ENCODE measurements at regions of chr3 and their contacts with region 1.

Region 1: GRCh38 chr3:49378249-49378892 is 20.2 kb upstream of the GPX1 start:
- DNase-seq: peak; percentile 85
- H3K4me3 ChIP-seq: no peak overlapping the region
- H3K27me3 ChIP-seq: no peaks in the 10 kb centered on the region
- CTCF ChIP-seq: no peak

Region 2: DNA sequence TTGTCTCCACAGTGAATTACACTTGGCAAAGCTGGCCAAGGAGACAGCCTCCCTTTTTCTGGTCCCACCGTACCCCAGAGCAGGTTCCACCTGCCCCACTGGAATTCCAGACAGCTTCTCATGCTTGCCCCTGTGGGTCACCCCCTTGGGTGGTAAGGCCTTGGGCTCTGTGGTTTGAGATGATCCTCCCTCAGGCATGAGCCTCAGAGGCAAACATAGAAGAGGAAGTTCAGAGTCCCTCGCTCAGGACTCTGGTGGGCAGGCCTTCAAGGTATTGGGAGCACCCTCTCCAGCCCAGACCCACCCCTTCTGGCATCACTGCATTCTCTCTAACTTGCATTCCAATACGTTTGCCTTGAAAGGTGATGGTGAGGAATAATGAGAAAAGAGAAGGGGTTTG is 453.0 kb after region 1 on chr3:
- CTCF ChIA-PET with region 1: no interaction called
- POLR2A ChIA-PET with region 1: interaction called, 16 read pairs
- DNase-seq: no peak
- H3K4me3 ChIP-seq: no peak overlapping the region
- H3K27me3 ChIP-seq: no peaks in the 10 kb centered on the region
- CTCF ChIP-seq: no peak